ENCODE measurements at regions of chr20 and their contacts with region 1.

Region 1: DNA sequence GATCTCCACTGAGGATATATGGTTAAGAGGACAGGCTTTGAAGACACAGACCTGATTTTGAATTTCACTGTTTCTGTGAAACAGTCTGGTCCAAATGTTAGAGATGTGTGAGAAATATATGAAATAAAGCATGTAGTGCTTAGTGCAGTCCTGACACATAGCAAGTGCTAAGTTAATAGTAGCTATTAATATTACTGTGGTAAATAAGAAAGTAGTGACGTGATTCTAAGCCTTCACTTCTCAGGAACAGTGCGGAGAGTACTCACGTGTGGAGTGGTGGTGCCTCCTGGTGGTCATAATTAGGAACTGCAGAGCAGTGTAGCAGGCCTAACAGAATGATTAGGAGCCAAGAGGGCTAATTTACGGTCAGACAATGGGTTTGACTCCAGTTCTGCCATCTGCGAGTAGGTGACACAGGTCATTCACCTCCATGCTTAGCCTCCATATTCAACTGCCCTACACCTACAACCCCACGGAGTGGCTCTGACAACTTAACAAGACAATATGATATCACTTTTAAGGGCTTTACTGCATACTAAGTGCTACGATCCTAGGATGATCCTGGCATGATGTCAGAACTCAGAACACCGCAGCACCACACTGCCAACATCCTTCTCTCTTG is 106.2 kb downstream of the JPH2 start:
- DNase-seq: peak; percentile 77 to 85
- ATAC-seq: peak; percentile 91 to 98
- H3K4me3 ChIP-seq: no peak overlapping the region
- H3K27ac ChIP-seq: peak overlapping the region in 1 of 2 experiments; percentile 16; a peak in 1 of 6 replicates
- H3K4me1 ChIP-seq: no peaks in the 10 kb centered on the region
- CTCF ChIP-seq: peak; percentile 96
- EP300 ChIP-seq: no peak
- POLR2A ChIP-seq: no peak
- RAD21 ChIP-seq: peak; percentile 98 to 99

Region 2: DNA sequence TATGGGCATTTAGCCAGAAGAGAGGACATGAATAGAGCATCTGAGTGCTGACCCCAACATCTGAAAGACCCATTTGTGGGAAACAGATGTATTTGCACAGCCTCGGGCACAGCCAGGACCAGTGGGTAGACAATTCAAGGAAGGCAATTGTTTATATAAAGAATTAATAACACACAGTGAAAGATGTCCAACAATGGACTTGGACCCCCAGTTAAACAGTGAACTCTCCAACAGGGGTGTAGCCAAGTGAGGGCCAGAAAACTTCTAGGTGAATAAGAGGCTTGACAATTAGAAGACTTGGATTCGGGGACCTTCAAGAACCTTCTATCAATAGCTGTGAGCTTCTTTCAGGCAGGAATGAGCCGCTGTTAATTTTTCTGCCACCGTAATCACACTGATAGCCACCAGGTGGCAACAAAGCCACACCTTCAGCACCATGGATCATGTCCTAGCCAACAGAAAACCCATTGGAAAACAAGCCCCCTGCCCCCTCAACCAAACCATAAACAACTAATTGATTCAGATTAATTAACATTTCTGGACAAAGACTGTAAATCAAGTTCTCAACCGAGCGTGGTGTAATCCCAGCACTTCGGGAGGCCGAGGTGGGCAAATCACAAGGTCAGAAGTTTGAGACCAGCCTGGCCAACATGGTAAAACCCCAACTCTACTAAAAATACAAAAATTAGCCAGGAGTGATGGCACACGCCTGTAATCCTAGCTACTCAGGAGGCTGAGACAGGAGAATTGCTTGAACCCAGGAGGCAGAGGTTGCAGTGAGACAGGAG is 631.8 kb before region 1 on chr20:
- CTCF ChIA-PET with region 1: interaction called, 19 read pairs
- POLR2A ChIA-PET with region 1: no interaction called
- DNase-seq: peak; percentile 56 to 72
- ATAC-seq: peak; percentile 82 to 85
- H3K4me3 ChIP-seq: no peak overlapping the region
- H3K27ac ChIP-seq: no peak overlapping the region
- H3K4me1 ChIP-seq: 0 out of 3 replicates have a peak, but pooled peaks cover 3% of the 10 kb centered on the region
- CTCF ChIP-seq: peak; percentile 83
- EP300 ChIP-seq: no peak
- POLR2A ChIP-seq: no peak
- RAD21 ChIP-seq: peak; percentile 87 to 88

Region 3: DNA sequence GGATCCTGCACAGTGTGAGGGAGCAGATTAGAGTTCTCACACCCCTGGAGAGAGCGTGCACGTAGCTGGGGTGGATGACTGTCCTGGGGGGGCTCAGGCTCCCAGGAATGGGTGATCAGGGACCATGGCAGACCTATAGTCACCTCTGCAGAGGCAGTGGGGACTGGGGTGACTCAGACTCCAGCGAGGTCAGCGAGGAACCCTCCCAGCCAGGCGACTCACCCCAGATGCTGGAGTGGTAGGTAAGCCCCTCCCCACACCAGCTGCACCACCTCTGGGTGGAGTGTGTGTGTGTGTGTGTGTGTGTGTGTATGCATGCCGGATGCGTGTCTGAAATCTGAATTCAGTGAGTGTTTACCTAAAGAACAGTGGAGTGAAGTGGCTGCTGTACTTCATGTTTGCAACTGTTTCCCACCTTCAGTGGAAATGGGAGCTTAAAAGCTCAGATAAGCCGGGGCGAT is 336.6 kb before region 1 on chr20:
- CTCF ChIA-PET with region 1: interaction called, 210 read pairs
- POLR2A ChIA-PET with region 1: no interaction called
- DNase-seq: no peak
- ATAC-seq: peak; percentile 37 to 46; a peak in 2 of 6 replicates
- H3K4me3 ChIP-seq: no peak overlapping the region
- H3K27ac ChIP-seq: no peak overlapping the region
- H3K4me1 ChIP-seq: peaks cover 7% of the 10 kb centered on the region; the same call in 2 of the 3 replicates
- CTCF ChIP-seq: no peak
- EP300 ChIP-seq: no peak
- POLR2A ChIP-seq: no peak
- RAD21 ChIP-seq: no peak

Region 4: DNA sequence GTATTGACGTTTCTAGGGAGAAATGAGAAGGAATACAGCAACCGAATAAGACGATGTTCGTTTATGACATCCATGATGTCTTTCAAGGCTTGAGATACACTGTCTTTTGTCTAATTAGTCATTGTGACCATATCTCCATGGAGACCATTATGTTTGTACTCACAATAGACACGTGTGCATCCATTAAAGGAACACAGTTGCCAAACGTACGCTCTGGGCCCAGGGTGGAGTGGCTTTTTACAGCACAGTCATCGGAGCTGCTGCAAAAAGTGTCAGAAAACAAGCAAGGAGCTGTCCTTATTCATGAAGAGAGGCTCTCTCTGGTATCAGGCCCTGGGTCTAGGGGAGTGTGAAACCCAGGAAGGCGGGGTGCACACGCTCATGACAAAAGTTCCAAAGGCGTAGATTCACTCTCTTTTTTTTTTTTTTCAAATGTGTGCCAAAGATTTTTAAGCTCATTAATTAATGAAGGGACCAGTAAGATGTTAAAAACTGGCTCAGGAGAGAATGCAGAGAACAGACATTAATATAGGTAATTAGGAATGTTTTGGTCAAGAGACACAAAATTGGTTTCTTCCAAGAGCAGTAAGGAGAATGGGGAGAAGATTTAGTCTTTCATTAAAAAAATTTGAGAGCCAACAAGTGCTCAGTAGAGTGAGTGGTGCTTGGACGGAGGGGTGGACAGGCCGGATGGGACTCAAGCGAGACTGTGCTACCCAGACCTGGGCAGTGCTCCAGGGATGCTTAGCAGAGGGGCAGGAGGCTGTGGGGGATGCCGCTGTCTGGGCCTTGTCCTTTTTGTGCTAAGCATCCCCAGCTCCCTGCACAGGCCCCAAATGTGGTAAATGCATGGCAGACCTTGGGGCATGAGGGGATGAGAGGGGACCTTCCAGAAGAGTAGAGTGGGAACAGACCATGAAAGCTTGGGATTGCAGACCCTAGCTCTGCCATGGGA is 319.1 kb before region 1 on chr20:
- CTCF ChIA-PET with region 1: interaction called, 210 read pairs
- POLR2A ChIA-PET with region 1: no interaction called
- DNase-seq: no peak
- ATAC-seq: peak in 1 of 2 experiments; percentile 19; a peak in 2 of 6 replicates
- H3K4me3 ChIP-seq: no peak overlapping the region
- H3K27ac ChIP-seq: no peak overlapping the region
- H3K4me1 ChIP-seq: no peaks in the 10 kb centered on the region
- CTCF ChIP-seq: no peak
- EP300 ChIP-seq: no peak
- POLR2A ChIP-seq: no peak
- RAD21 ChIP-seq: no peak

Region 5: GRCh38 chr20:43936104-43936770 is 144.5 kb before region 1 on chr20:
- CTCF ChIA-PET with region 1: interaction called, 10 read pairs
- POLR2A ChIA-PET with region 1: no interaction called
- DNase-seq: no peak
- ATAC-seq: no peak
- H3K4me3 ChIP-seq: no peak overlapping the region
- H3K27ac ChIP-seq: peak overlapping the region; percentile 85 to 90; a peak in 4 of 6 replicates
- H3K4me1 ChIP-seq: peaks cover 47% of the 10 kb centered on the region
- CTCF ChIP-seq: no peak
- EP300 ChIP-seq: no peak
- POLR2A ChIP-seq: no peak
- RAD21 ChIP-seq: no peak

Region 6: DNA sequence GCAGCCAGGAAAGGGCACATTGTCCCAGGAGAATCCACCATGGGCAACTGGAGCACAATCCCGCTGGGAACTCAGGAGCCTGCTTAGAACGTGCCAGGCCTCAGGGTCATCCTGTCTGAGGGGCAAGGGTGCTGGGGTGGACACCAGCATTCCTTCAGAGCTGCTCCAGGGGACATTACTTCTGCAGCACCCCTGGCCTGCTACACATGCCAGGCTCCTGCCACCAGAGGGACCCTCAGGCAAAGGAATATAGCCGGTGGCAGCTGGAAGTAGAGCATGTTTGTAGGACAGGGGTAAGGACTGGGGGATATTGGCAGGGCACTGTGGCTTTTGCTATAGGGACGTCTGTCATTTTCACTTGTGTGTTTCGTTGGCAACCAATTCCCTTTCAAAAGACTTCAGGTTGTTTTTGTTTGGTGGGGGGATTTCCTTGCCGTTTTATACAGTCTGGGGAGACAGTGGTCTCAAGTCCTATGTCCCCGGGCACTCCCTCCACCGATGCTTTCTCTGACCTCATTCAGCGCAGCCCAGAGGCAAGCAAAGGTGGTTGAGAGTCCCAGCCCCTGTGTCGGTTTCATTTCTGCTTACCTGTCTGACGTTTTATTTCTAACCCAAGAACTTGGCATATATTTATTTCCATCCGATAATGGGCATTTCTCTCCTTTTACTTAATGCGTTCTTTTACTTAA is 24.6 kb before region 1 on chr20:
- CTCF ChIA-PET with region 1: interaction called, 19 read pairs
- POLR2A ChIA-PET with region 1: no interaction called
- DNase-seq: peak; percentile 19 to 36
- ATAC-seq: peak; percentile 89 to 91
- H3K4me3 ChIP-seq: no peak overlapping the region
- H3K27ac ChIP-seq: no peak overlapping the region
- H3K4me1 ChIP-seq: no peaks in the 10 kb centered on the region
- CTCF ChIP-seq: peak; percentile 33; the same call in 2 of the 3 replicates
- EP300 ChIP-seq: no peak
- POLR2A ChIP-seq: no peak
- RAD21 ChIP-seq: peak; percentile 44 to 56

Region 7: GRCh38 chr20:44092551-44093248 is 11.9 kb after region 1 on chr20:
- CTCF ChIA-PET with region 1: interaction called, 10 read pairs
- POLR2A ChIA-PET with region 1: no interaction called
- DNase-seq: peak in 1 of 2 experiments; percentile 60
- ATAC-seq: peak; percentile 66 to 80; a peak in 3 of 6 replicates
- H3K4me3 ChIP-seq: no peak overlapping the region
- H3K27ac ChIP-seq: no peak overlapping the region
- H3K4me1 ChIP-seq: peaks cover 4% of the 10 kb centered on the region; the same call in 2 of the 3 replicates
- CTCF ChIP-seq: peak; percentile 66
- EP300 ChIP-seq: no peak
- POLR2A ChIP-seq: no peak
- RAD21 ChIP-seq: peak; percentile 59 to 61

Region 8: GRCh38 chr20:44109951-44110361 is 29.2 kb after region 1 on chr20:
- CTCF ChIA-PET with region 1: no interaction called
- POLR2A ChIA-PET with region 1: no interaction called
- DNase-seq: no peak
- ATAC-seq: peak in 1 of 2 experiments; percentile 31; a peak in 1 of 6 replicates
- H3K4me3 ChIP-seq: no peak overlapping the region
- H3K27ac ChIP-seq: no peak overlapping the region
- H3K4me1 ChIP-seq: no peaks in the 10 kb centered on the region; the same call in 2 of the 3 replicates
- CTCF ChIP-seq: no peak
- EP300 ChIP-seq: no peak
- POLR2A ChIP-seq: no peak
- RAD21 ChIP-seq: no peak